ENCODE measurements at regions of chr14 and their contacts with region 1.

Region 1: DNA sequence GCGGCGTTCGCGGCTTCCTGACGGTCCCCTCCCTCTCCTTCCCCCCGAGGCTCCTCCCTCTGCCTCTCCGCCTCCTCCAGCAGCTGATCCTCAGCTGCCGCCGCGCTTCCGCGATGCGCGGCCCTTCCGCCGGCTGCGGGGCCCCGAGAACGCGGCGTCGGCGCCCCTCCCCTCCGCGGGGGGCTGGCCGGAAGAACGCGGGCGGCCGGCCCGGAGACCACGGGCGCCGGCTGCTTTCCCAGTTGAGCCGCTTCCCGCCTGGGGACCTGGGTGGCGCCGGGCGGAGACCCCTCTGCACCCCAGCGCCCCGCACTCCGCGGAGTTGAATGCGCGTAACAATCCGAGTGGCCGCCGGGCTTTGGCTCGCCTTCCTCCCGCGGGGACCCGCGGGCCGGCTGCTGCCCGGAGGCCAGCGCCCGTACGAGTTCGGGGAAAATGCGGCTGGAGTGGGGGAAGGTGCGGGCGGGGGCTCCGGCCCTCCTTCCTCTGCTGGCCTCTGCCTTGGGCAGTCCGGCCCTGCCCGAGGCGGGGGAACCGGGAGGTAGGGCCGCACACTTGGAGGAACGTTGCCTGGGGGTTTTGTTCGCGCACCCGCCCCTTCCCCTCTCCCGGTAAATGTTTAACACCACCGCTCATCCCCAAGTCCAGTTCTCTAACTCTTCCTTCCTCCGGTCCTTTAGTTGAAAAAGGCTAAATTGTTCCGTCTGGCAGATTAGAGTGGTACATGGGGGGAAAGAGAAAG is 383 bp upstream of the DCAF5 start:
- DNase-seq: peak; percentile 89 to 97 (median 94)
- H3K4me3 ChIP-seq: peak overlapping the region; percentile 32 to 94
- H3K4me3 Mint-ChIP-seq: peak overlapping the region; percentile 94 to 100 (median 97)
- H3K27ac ChIP-seq: peak overlapping the region; percentile 75
- H3K27ac Mint-ChIP-seq: peak overlapping the region; percentile 91 to 97 (median 93)
- H3K4me1 ChIP-seq: peaks cover 38% of the 10 kb centered on the region
- H3K4me1 Mint-ChIP-seq: peaks cover 22 to 45% (median 32%) of the 10 kb centered on the region in 4 donors
- H3K27me3 ChIP-seq: no peaks in the 10 kb centered on the region
- H3K27me3 Mint-ChIP-seq: peaks cover 0 to 2% of the 10 kb centered on the region in 2 donors

Region 2: DNA sequence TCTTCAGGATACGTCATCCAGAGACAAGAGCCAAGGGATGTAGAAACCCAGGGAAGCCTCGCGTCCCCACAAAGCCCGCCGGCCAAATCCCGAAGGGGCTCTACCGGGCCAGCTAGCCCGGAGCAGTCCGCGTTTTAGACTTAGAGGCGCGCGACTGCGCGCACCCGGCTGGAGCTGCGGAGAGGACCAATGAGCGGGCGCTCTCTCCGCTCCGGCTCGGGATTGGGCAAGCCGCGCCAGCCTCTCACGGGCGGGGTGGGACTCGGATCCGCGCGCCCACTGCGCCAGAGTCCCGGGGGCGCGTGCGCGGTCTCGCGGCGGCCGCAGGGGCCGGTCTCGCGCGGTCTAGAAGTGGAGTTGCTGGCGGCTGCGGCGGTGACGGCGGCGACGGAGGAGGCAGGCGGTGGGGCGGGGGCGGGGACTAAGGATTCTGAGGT is 1912.3 kb before region 1 on chr14:
- CTCF ChIA-PET with region 1: no interaction called
- POLR2A ChIA-PET with region 1: no interaction called
- intact Hi-C with region 1: loop called (anchors 5 kb)
- DNase-seq: peak; percentile 90 to 92 (median 91)
- H3K4me3 ChIP-seq: peak overlapping the region; percentile 73 to 90
- H3K4me3 Mint-ChIP-seq: peak overlapping the region; percentile 81 to 94 (median 92)
- H3K27ac ChIP-seq: peak overlapping the region; percentile 61
- H3K27ac Mint-ChIP-seq: peak overlapping the region; percentile 83 to 93 (median 88)
- H3K4me1 ChIP-seq: peaks cover 17% of the 10 kb centered on the region
- H3K4me1 Mint-ChIP-seq: peaks cover 7 to 32% (median 18%) of the 10 kb centered on the region in 4 donors
- H3K27me3 ChIP-seq: no peaks in the 10 kb centered on the region
- H3K27me3 Mint-ChIP-seq: no peaks in the 10 kb centered on the region

Region 3: GRCh38 chr14:69129264-69129880 is 23.9 kb before region 1 on chr14:
- CTCF ChIA-PET with region 1: interaction called, 53 read pairs
- POLR2A ChIA-PET with region 1: interaction called, 22 read pairs
- intact Hi-C with region 1: loop called (anchors 1 kb)
- DNase-seq: peak; percentile 70 to 75 (median 71)
- H3K4me3 ChIP-seq: no peak overlapping the region
- H3K4me3 Mint-ChIP-seq: peak overlapping the region in 3 of 8 donors; percentile 42 to 50 (median 46)
- H3K27ac ChIP-seq: no peak overlapping the region
- H3K27ac Mint-ChIP-seq: peak overlapping the region; percentile 16 to 89 (median 61)
- H3K4me1 ChIP-seq: peaks cover 63% of the 10 kb centered on the region
- H3K4me1 Mint-ChIP-seq: peaks cover 48 to 81% (median 66%) of the 10 kb centered on the region in 4 donors
- H3K27me3 ChIP-seq: no peaks in the 10 kb centered on the region
- H3K27me3 Mint-ChIP-seq: no peaks in the 10 kb centered on the region

Region 4: GRCh38 chr14:69170839-69171238 is 17.5 kb after region 1 on chr14:
- CTCF ChIA-PET with region 1: no interaction called
- POLR2A ChIA-PET with region 1: no interaction called
- intact Hi-C with region 1: no loop called
- DNase-seq: no peak
- H3K4me3 ChIP-seq: no peak overlapping the region
- H3K4me3 Mint-ChIP-seq: no peak overlapping the region
- H3K27ac ChIP-seq: no peak overlapping the region
- H3K27ac Mint-ChIP-seq: no peak overlapping the region
- H3K4me1 ChIP-seq: no peaks in the 10 kb centered on the region
- H3K4me1 Mint-ChIP-seq: no peaks in the 10 kb centered on the region
- H3K27me3 ChIP-seq: no peaks in the 10 kb centered on the region
- H3K27me3 Mint-ChIP-seq: no peaks in the 10 kb centered on the region

Region 5: DNA sequence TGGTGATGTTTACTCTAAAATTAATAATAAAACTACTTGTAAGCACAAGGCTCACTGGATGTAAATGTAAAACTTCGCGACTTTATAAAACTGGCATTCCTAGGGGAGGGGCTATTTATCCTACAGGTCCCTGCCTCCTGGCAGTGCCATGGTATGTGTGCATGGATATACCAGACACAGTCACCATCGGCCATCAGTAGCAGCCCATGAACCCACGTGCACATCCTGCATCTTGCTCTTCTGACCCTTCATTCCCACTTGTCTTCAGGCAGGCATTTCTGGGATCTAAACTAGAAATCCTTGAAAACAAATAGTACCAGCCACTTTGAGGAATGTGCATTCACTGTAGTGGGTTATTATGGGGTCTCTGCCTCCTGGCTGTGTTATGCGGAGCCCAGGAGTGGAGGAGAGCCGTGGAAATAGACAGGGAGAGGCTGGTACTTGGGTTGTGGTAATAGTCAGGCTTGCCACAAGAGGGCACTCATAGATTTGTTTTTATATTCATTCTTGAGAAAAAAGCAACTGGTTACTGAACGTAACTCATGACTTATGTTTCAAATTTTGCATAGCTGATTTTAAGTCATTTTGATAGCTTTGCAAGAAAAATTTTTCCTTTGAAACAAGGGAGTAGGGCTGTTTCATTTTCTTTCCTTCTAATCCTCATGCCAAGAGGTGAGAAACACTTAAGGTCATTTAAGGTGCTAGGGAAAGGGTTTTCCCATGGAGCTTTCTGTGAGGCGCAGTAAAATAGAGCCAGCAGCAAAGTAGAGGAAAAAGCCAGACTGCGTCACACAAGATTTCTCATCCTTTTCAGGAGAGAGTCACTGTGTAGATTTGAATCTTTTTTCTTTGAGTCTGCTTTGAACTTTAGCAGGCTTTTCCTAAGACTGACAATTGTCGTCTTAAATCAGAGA is 89.3 kb after region 1 on chr14:
- CTCF ChIA-PET with region 1: interaction called, 13 read pairs
- POLR2A ChIA-PET with region 1: no interaction called
- intact Hi-C with region 1: loop called (anchors 5 kb)
- DNase-seq: peak; percentile 47 to 58 (median 55)
- H3K4me3 ChIP-seq: no peak overlapping the region
- H3K4me3 Mint-ChIP-seq: no peak overlapping the region
- H3K27ac ChIP-seq: no peak overlapping the region
- H3K27ac Mint-ChIP-seq: no peak overlapping the region
- H3K4me1 ChIP-seq: no peaks in the 10 kb centered on the region
- H3K4me1 Mint-ChIP-seq: peaks cover 1 to 6% (median 5%) of the 10 kb centered on the region in 4 donors
- H3K27me3 ChIP-seq: no peaks in the 10 kb centered on the region
- H3K27me3 Mint-ChIP-seq: no peaks in the 10 kb centered on the region

Region 6: GRCh38 chr14:69766984-69767368 is 613.7 kb after region 1 on chr14 and contains the start of gene SRSF5:
- CTCF ChIA-PET with region 1: no interaction called
- POLR2A ChIA-PET with region 1: interaction called, 11 read pairs
- intact Hi-C with region 1: loop called (anchors 2 kb)
- DNase-seq: peak; percentile 92 to 95 (median 94)
- H3K4me3 ChIP-seq: peak within 1 kb of the TSS; percentile 83 to 95
- H3K4me3 Mint-ChIP-seq: peak within 1 kb of the TSS; percentile 98 to 100 (median 100)
- H3K27ac ChIP-seq: peak within 1 kb of the TSS; percentile 100
- H3K27ac Mint-ChIP-seq: peak within 1 kb of the TSS; percentile 100
- H3K4me1 ChIP-seq: peaks cover 48% of the 10 kb centered on the region
- H3K4me1 Mint-ChIP-seq: peaks cover 41 to 79% (median 57%) of the 10 kb centered on the region in 4 donors
- H3K27me3 ChIP-seq: no peaks in the 10 kb centered on the region
- H3K27me3 Mint-ChIP-seq: no peaks in the 10 kb centered on the region
- total RNA-seq, gene SRSF5: 946 to 964 TPM